Posterior vena cava (tissue), 2 donors: ENCODE measurements at regions of chr6 and their contacts with region 1.

Region 1: DNA sequence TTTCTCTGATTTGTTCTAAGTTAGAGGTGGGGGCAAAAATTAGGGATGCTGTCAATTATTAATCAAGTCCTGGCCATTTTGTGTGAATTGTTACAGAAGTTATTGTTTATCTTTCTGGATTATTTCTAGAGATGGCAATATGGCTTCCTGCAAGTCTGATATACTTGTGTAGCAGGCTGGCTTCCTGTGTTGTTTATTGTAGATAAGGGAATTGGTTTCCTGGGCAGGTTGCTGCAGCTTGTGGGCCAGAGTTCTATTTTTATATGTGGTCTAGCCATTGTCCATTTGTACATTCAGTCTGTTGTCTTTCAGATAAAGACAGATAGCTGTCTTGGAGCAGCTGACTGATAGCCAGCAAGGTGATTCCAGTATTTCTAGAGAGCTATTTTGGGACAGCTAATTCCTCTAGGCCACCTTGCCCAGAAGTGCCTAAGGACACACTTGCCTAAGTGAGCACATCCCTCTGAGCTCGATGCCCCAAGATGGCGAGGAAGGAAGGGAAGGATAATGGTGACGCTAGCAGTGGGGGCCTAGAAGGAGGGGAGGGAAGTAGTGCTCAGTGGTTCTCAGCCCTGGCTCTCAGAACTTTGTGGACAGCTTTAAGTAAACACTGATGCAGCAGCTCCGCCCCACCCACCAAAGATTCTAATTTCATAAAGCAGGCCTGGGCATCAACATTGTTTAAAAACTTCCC is 25.5 kb downstream of the DDO start:
- DNase-seq: no peak

Region 2: DNA sequence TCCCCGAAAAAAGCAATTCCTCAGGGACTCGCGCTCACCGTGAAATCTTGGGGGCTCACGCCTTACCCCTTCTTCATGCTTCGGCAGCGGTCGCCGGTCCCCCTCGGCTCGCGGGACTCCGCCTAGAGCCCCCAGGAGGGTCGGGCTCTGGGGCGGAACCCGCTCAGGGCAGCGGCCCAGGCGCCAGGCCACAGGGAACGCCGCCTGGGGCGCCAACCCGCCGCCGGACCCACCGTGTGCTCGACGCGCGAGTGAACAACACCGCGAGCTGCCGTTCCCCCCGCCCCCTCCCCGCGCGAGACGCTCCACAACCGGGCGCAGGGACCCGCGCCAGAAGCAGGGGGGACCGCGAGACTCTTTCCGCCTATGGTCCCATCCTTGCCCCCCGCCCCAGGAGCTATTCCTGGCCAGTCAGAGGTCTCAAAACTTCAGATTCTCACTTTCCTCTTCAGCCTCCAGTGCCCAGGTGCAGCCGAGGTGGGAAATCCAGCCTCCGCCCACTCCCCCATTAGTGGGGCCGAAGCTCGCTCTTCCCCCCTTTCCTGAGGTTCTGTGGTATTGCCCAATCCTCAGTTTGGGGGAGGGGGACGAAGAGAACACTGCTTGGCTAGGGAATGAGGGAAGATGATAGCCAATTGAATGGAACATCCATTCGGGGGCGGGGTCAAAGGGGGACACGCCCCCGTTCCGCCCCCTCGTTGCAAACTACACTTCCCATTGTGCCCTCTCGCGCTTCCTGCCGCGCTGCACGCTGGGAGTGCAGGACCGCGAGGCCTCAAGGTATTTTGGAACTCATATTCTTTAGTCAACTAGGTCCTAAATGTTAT is 210.2 kb before region 1 on chr6 and contains the start of gene WASF1:
- intact Hi-C with region 1: loop called (anchors 2 to 10 kb)
- DNase-seq: peak; percentile 98
- total RNA-seq, gene WASF1: 11.0 to 13.7 TPM